ENCODE measurements at regions of chr20 and their contacts with region 1.

Region 1: GRCh38 chr20:23099791-23100698 is 13.9 kb upstream of the CD93 start:
- DNase-seq: peak; percentile 26 to 75
- H3K4me3 ChIP-seq: no peak overlapping the region
- H3K27ac ChIP-seq: no peak overlapping the region
- H3K4me1 ChIP-seq: peaks cover 11% of the 10 kb centered on the region
- H3K27me3 ChIP-seq: no peaks in the 10 kb centered on the region
- CTCF ChIP-seq: no peak

Region 2: DNA sequence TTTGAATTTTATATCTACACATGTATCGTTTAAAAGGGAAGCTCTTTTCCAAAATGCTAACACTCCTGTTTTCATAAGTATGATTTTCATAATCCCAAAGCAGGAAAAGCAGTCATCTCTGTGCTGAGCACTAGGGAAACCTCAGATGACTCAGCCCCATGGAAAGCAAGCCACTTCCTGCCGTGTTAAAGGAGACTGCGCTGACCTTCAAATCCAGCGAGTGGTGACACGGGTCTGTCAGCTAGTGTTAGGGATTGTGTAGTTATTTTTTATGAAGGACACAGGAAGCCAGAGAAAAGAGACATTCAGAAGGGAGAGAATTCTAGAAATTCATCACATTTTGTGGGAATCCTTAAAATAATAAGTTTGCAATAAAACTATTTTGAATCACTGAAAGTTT is 43.1 kb after region 1 on chr20:
- CTCF ChIA-PET with region 1: no interaction called
- POLR2A ChIA-PET with region 1: interaction called, 36 read pairs
- intact Hi-C with region 1: no loop called
- DNase-seq: peak; percentile 37 to 82
- H3K4me3 ChIP-seq: no peak overlapping the region
- H3K27ac ChIP-seq: peak overlapping the region; percentile 93
- H3K4me1 ChIP-seq: peaks cover 76% of the 10 kb centered on the region
- H3K27me3 ChIP-seq: no peaks in the 10 kb centered on the region
- CTCF ChIP-seq: no peak

Measured in PC-9 (cell line).